Caco-2 (cell line): ENCODE measurements at regions of chr13 and their contacts with region 1.

Region 1: GRCh38 chr13:102845630-102846260 is at the start of gene ERCC5:
- DNase-seq: peak; percentile 95 to 97
- H3K4me3 ChIP-seq: peak within 1 kb of the TSS; percentile 70
- H3K4me3 Mint-ChIP-seq: peak within 1 kb of the TSS; percentile 77
- H3K27ac Mint-ChIP-seq: peak within 1 kb of the TSS; percentile 92
- H3K4me1 ChIP-seq: no peaks in the 10 kb centered on the region
- H3K4me1 Mint-ChIP-seq: no peaks in the 10 kb centered on the region
- H3K27me3 ChIP-seq: no peaks in the 10 kb centered on the region
- H3K27me3 Mint-ChIP-seq: no peaks in the 10 kb centered on the region
- CTCF ChIP-seq: peak in 1 of 2 experiments; percentile 15
- total RNA-seq, gene ERCC5: 29.9 and 31.4 TPM in 2 replicates

Region 2: DNA sequence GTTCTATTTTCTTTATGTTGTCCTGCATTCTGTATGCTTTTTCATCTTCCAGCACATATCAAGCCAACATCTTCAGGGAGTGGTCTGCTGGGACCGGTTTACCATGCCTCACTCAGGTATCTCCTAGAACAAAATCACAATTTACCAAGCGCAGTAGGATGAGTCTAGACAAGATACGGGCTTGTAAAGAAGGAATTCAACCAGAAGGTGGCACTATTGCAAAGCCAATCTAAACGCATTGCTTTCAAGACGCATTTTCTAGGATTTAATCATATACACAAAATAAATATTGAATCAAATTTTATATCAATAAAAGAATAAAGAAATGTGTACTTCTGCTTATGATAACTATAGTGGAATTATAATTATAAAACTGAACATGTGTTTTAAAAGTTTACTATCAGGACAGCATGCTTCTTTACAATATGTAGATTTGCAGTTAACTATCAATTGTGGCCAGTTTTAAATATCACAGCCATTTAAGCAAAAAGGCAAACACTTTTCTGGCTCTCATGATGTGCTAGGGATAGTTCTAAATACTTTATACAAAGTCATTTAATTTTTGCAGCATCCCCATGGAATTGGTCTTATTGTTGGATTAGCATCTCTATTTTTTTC is 265.1 kb before region 1 on chr13:
- CTCF ChIA-PET with region 1: interaction called, 4 read pairs
- POLR2A ChIA-PET with region 1: no interaction called
- intact Hi-C with region 1: loop called (anchors 1 kb)
- DNase-seq: peak in 1 of 2 experiments; percentile 54
- H3K4me3 ChIP-seq: no peak overlapping the region
- H3K4me3 Mint-ChIP-seq: no peak overlapping the region
- H3K27ac Mint-ChIP-seq: no peak overlapping the region
- H3K4me1 ChIP-seq: no peaks in the 10 kb centered on the region
- H3K4me1 Mint-ChIP-seq: no peaks in the 10 kb centered on the region
- H3K27me3 ChIP-seq: no peaks in the 10 kb centered on the region
- H3K27me3 Mint-ChIP-seq: peaks cover 6% of the 10 kb centered on the region
- CTCF ChIP-seq: peak; percentile 66 to 75

Region 3: DNA sequence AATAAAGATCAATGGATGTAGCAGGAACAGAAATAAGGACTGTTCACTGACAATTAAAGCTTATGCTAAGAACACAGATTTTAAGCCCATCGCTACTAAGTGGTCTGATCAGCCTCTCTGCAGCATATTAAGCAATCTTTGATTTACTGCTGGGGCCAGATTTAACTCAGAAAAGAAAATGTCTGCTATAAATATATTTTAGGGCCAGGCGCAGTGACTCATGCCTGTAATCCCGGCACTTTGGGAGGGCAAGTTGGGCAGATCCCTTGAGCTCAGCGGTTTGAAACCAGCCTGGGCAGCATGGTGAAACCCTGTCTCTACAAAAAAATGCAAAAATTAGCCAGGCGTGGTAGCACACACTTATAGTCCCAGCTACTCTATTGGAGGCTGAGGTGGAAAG is 193.9 kb before region 1 on chr13:
- CTCF ChIA-PET with region 1: no interaction called
- POLR2A ChIA-PET with region 1: no interaction called
- intact Hi-C with region 1: loop called (anchors 5 kb)
- DNase-seq: no peak
- H3K4me3 ChIP-seq: no peak overlapping the region
- H3K4me3 Mint-ChIP-seq: no peak overlapping the region
- H3K27ac Mint-ChIP-seq: peak overlapping the region; percentile 57
- H3K4me1 ChIP-seq: peaks cover 32% of the 10 kb centered on the region
- H3K4me1 Mint-ChIP-seq: peaks cover 7% of the 10 kb centered on the region
- H3K27me3 ChIP-seq: no peaks in the 10 kb centered on the region
- H3K27me3 Mint-ChIP-seq: no peaks in the 10 kb centered on the region
- CTCF ChIP-seq: no peak

Region 4: DNA sequence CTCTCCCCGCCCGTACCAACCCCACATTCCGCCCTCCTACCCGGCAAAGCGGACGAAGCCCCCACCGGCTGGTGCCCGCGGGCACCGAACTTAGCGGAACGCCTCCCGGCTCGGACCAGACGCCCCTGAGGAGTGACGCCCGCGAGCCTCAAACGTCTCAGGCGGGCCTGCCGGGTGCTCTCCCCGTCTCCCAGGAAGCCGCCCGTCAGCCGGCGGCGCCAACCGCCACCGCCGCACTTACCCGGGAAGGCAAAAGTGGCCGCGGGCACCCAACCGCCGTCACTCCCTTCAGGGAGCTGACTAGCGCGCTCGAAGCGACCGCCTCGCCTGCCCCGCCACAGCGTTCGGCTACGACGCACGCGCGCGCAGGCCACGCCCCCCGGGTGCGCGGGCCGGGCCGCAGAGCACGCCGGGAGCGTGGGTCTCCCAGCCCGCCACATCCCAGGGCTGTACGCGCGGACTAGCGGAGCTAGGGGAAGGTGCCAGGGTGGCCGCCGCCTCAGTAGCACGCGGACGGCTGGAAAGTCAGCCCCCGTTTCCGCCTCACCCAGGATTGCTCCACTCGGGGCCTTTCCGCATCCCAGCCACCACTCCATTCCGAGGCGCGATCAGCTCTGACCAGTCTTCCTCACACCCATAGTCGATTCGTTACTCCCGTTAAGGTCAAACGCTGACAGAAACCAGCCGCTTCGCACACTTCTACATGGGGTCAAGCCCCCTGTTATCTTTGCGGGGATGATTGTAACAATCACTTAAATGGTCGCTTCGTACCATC is 72.1 kb before region 1 on chr13 and contains the start of gene TEX30:
- CTCF ChIA-PET with region 1: interaction called, 5 read pairs
- POLR2A ChIA-PET with region 1: interaction called, 9 read pairs
- intact Hi-C with region 1: loop called (anchors 2 kb)
- DNase-seq: peak; percentile 87 to 94
- H3K4me3 ChIP-seq: peak within 1 kb of the TSS; percentile 96
- H3K4me3 Mint-ChIP-seq: peak within 1 kb of the TSS; percentile 92
- H3K27ac Mint-ChIP-seq: peak within 1 kb of the TSS; percentile 94
- H3K4me1 ChIP-seq: peaks cover 24% of the 10 kb centered on the region
- H3K4me1 Mint-ChIP-seq: peaks cover 31% of the 10 kb centered on the region
- H3K27me3 ChIP-seq: no peaks in the 10 kb centered on the region
- H3K27me3 Mint-ChIP-seq: no peaks in the 10 kb centered on the region
- CTCF ChIP-seq: no peak
- total RNA-seq, gene TEX30: 27.5 and 30.4 TPM in 2 replicates

Region 5: GRCh38 chr13:102800145-102801041 is 45.4 kb before region 1 on chr13:
- CTCF ChIA-PET with region 1: interaction called, 8 read pairs
- POLR2A ChIA-PET with region 1: interaction called, 10 read pairs
- intact Hi-C with region 1: loop called (anchors 1 kb)
- DNase-seq: peak; percentile 85 to 93
- H3K4me3 ChIP-seq: peak overlapping the region; percentile 84
- H3K4me3 Mint-ChIP-seq: peak overlapping the region; percentile 93
- H3K27ac Mint-ChIP-seq: peak overlapping the region; percentile 81
- H3K4me1 ChIP-seq: 0 out of 2 replicates have a peak, but pooled peaks cover 4% of the 10 kb centered on the region
- H3K4me1 Mint-ChIP-seq: no peaks in the 10 kb centered on the region
- H3K27me3 ChIP-seq: no peaks in the 10 kb centered on the region
- H3K27me3 Mint-ChIP-seq: no peaks in the 10 kb centered on the region
- CTCF ChIP-seq: peak; percentile 91

Region 6: GRCh38 chr13:103331924-103332323 is 486.2 kb after region 1 on chr13:
- CTCF ChIA-PET with region 1: no interaction called
- POLR2A ChIA-PET with region 1: no interaction called
- intact Hi-C with region 1: no loop called
- DNase-seq: no peak
- H3K4me3 ChIP-seq: no peak overlapping the region
- H3K4me3 Mint-ChIP-seq: no peak overlapping the region
- H3K27ac Mint-ChIP-seq: no peak overlapping the region
- H3K4me1 ChIP-seq: no peaks in the 10 kb centered on the region
- H3K4me1 Mint-ChIP-seq: no peaks in the 10 kb centered on the region
- H3K27me3 ChIP-seq: no peaks in the 10 kb centered on the region
- H3K27me3 Mint-ChIP-seq: no peaks in the 10 kb centered on the region
- CTCF ChIP-seq: no peak